ENCODE measurements at regions of chr1 and their contacts with region 1.

Region 1: GRCh38 chr1:42456010-42456758 is at the starts of genes PPCS and ZMYND12:
- DNase-seq: peak; percentile 84
- H3K4me3 Mint-ChIP-seq: peak within 1 kb of the TSS; percentile 80
- H3K27ac Mint-ChIP-seq: peak within 1 kb of the TSS; percentile 74
- H3K4me1 Mint-ChIP-seq: no peaks in the 10 kb centered on the region
- H3K27me3 Mint-ChIP-seq: no peaks in the 10 kb centered on the region
- CTCF ChIP-seq: no peak
- total RNA-seq, gene PPCS: 56.1 and 56.9 TPM in 2 replicates
- total RNA-seq, gene ZMYND12: 0.21 TPM in 1 of 2 replicates, not detected in the other

Region 2: GRCh38 chr1:42504535-42505128 is 48.4 kb after region 1 on chr1:
- CTCF ChIA-PET with region 1: no interaction called
- POLR2A ChIA-PET with region 1: no interaction called
- intact Hi-C with region 1: no loop called
- DNase-seq: no peak
- H3K4me3 Mint-ChIP-seq: no peak overlapping the region
- H3K27ac Mint-ChIP-seq: no peak overlapping the region
- H3K4me1 Mint-ChIP-seq: no peaks in the 10 kb centered on the region
- H3K27me3 Mint-ChIP-seq: no peaks in the 10 kb centered on the region
- CTCF ChIP-seq: no peak

Region 3: GRCh38 chr1:42657971-42658879 is 202.0 kb after region 1 on chr1 and contains the start of gene PPIH:
- CTCF ChIA-PET with region 1: no interaction called
- POLR2A ChIA-PET with region 1: interaction called, 10 read pairs
- intact Hi-C with region 1: no loop called
- DNase-seq: peak; percentile 92
- H3K4me3 Mint-ChIP-seq: peak within 1 kb of the TSS; percentile 97
- H3K27ac Mint-ChIP-seq: peak within 1 kb of the TSS; percentile 95
- H3K4me1 Mint-ChIP-seq: peaks cover 13% of the 10 kb centered on the region
- H3K27me3 Mint-ChIP-seq: peaks cover under 1% of the 10 kb centered on the region
- CTCF ChIP-seq: no peak
- total RNA-seq, gene PPIH: 52.4 and 55.9 TPM in 2 replicates

Region 4: DNA sequence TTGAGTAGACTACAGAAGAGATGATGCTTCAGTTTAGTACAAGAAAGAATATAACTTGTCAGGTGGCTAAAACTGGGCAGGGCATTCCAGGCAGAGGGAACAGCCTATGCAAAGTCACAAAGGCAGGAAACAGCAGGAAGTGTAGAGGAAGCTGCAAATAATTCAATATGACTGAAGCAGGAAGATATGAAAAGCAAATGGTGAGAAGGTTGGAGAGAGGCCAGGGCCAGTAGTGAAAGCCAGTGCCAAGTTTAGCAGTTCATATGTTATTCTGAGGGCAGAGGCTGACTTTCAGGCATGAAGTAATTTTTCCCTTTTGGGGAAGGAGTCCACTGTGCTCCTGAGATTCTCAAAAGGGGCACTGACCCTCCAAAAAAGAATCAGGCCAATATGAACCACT is 218.0 kb after region 1 on chr1:
- CTCF ChIA-PET with region 1: no interaction called
- POLR2A ChIA-PET with region 1: no interaction called
- intact Hi-C with region 1: no loop called
- DNase-seq: no peak
- H3K4me3 Mint-ChIP-seq: no peak overlapping the region
- H3K27ac Mint-ChIP-seq: peak overlapping the region; percentile 81
- H3K4me1 Mint-ChIP-seq: no peaks in the 10 kb centered on the region
- H3K27me3 Mint-ChIP-seq: no peaks in the 10 kb centered on the region
- CTCF ChIP-seq: no peak